ENCODE measurements at regions of chr7 and their contacts with region 1.

Region 1: GRCh38 chr7:32479574-32480200 is 10.5 kb downstream of the LSM5 start:
- DNase-seq: peak; percentile 29
- H3K4me3 ChIP-seq: no peak overlapping the region
- H3K27ac ChIP-seq: no peak overlapping the region
- H3K4me1 ChIP-seq: peaks cover 27% of the 10 kb centered on the region
- H3K27me3 ChIP-seq: no peaks in the 10 kb centered on the region
- CTCF ChIP-seq: peak; percentile 99

Region 2: GRCh38 chr7:32212321-32212720 is 267.4 kb before region 1 on chr7:
- CTCF ChIA-PET with region 1: interaction called, 4 read pairs
- dilution Hi-C with region 1: no loop called
- in situ Hi-C with region 1: loop called (anchors 5 kb)
- intact Hi-C with region 1: loop called (anchors 1 kb)
- DNase-seq: no peak
- H3K4me3 ChIP-seq: no peak overlapping the region
- H3K27ac ChIP-seq: no peak overlapping the region
- H3K4me1 ChIP-seq: no peaks in the 10 kb centered on the region
- H3K27me3 ChIP-seq: no peaks in the 10 kb centered on the region
- CTCF ChIP-seq: no peak

Region 3: DNA sequence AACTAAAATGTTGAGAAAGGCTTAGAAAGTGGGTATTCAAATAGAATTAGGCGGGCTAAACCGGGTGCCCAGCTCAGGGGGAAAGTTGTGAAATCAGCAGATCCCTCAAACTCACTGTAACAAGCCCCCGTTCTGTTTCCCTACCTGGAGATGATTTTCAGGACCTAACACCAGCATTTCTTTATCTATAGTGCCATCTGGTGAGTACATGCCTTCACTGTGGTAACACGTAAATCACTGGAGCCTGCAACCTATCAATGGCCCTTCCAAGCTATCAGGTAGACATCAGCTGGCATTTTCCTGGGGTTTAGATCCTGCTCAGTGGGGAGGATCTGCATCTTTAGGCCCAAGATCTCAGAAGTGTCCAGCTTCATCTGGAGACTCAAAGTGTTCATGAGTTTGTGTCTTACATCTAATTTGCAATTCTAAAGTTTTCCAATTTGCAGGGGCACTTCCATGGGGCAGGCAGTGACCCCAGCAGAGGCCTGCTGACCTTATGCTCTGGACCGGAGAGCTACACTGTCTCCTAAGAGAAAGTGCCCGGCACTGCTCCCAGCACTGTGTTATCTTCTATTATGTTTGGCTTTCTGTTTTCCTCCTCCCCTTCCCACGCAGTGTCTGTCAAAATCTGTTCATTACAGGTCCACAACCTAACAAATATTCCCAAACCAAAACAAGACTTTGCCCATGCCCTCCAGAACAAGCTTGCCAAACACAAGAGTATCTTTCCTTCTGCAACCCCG is 122.0 kb before region 1 on chr7:
- CTCF ChIA-PET with region 1: no interaction called
- dilution Hi-C with region 1: no loop called
- in situ Hi-C with region 1: loop called in 1 of 2 experiments (anchors 5 kb)
- intact Hi-C with region 1: loop called (anchors 2 kb)
- DNase-seq: peak; percentile 22
- H3K4me3 ChIP-seq: no peak overlapping the region
- H3K27ac ChIP-seq: no peak overlapping the region
- H3K4me1 ChIP-seq: no peaks in the 10 kb centered on the region
- H3K27me3 ChIP-seq: peaks cover 3% of the 10 kb centered on the region
- CTCF ChIP-seq: peak; percentile 51 to 66

Region 4: GRCh38 chr7:32390210-32390609 is 89.5 kb before region 1 on chr7:
- CTCF ChIA-PET with region 1: no interaction called
- dilution Hi-C with region 1: no loop called
- in situ Hi-C with region 1: no loop called
- intact Hi-C with region 1: loop called (anchors 1 kb)
- DNase-seq: no peak
- H3K4me3 ChIP-seq: no peak overlapping the region
- H3K27ac ChIP-seq: no peak overlapping the region
- H3K4me1 ChIP-seq: no peaks in the 10 kb centered on the region
- H3K27me3 ChIP-seq: no peaks in the 10 kb centered on the region
- CTCF ChIP-seq: peak in 1 of 2 donors; percentile 42

Region 5: GRCh38 chr7:32427769-32428291 is 51.9 kb before region 1 on chr7:
- CTCF ChIA-PET with region 1: no interaction called
- dilution Hi-C with region 1: no loop called
- in situ Hi-C with region 1: no loop called
- intact Hi-C with region 1: loop called (anchors 1 kb)
- DNase-seq: peak; percentile 77
- H3K4me3 ChIP-seq: no peak overlapping the region
- H3K27ac ChIP-seq: no peak overlapping the region
- H3K4me1 ChIP-seq: peaks cover 3% of the 10 kb centered on the region
- H3K27me3 ChIP-seq: peaks cover 7% of the 10 kb centered on the region
- CTCF ChIP-seq: peak; percentile 52 to 68